Activated T-helper 2 cell treated with anti-CD3 and anti-CD28 coated beads, Interferon-gamma antibody, Interleukin-2, Interleukin-4, amounts not matched to agents 10 μg/mL and 5 μg/mL and 100 μg/mL, durations not matched to agents 14 hours and 24 hours and 36 hours (primary cell): ENCODE measurements at regions of chr18 and their contacts with region 1.

Region 1: DNA sequence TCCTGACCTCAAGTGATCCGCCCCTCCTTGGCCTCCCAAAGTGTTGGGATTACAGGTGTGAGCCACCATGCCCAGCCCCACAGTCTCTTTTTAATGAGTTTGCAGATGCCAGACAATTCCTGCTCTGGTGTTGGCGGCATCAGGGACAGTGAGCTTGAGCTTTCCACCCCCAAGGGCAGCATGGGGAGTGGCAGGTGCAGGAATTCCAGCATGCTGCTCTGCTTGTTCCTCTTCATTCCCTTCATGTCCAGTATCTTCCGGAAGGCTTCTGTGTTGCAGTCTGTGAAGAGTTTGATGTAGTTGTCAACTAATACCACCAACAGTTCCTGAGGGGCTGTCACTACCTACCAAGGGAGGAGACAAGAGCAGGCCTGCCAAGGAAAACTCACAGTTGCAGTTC is 137.3 kb downstream of the SS18 start:
- DNase-seq: no peak
- H3K4me3 Mint-ChIP-seq: no peak overlapping the region
- H3K27ac Mint-ChIP-seq: no peak overlapping the region
- H3K4me1 Mint-ChIP-seq: peaks cover 8% of the 10 kb centered on the region
- H3K27me3 Mint-ChIP-seq: no peaks in the 10 kb centered on the region

Region 2: GRCh38 chr18:25896178-25896780 is 56.8 kb before region 1 on chr18:
- intact Hi-C with region 1: loop called (anchors 10 kb)
- DNase-seq: no peak
- H3K4me3 Mint-ChIP-seq: no peak overlapping the region
- H3K27ac Mint-ChIP-seq: no peak overlapping the region
- H3K4me1 Mint-ChIP-seq: no peaks in the 10 kb centered on the region
- H3K27me3 Mint-ChIP-seq: peaks cover 8% of the 10 kb centered on the region